Activated CD4-positive, alpha-beta memory T cell treated with anti-CD3 and anti-CD28 coated beads, Interleukin-2, amount 10 ng/mL, durations not matched to agents 7 days and 5 days (primary cell): ENCODE measurements at regions of chr20 and their contacts with region 1.

Region 1: GRCh38 chr20:17536944-17537444 is 5.8 kb upstream of the BFSP1 start:
- DNase-seq: peak; percentile 77
- H3K4me3 Mint-ChIP-seq: no peak overlapping the region
- H3K27ac Mint-ChIP-seq: no peak overlapping the region
- H3K4me1 Mint-ChIP-seq: peaks cover 45% of the 10 kb centered on the region
- H3K27me3 Mint-ChIP-seq: peaks cover 25% of the 10 kb centered on the region

Region 2: GRCh38 chr20:17617551-17618223 is 80.7 kb after region 1 on chr20:
- CTCF ChIA-PET with region 1: interaction called, 33 read pairs
- POLR2A ChIA-PET with region 1: no interaction called
- DNase-seq: peak; percentile 55
- H3K4me3 Mint-ChIP-seq: no peak overlapping the region
- H3K27ac Mint-ChIP-seq: no peak overlapping the region
- H3K4me1 Mint-ChIP-seq: peaks cover 14% of the 10 kb centered on the region
- H3K27me3 Mint-ChIP-seq: no peaks in the 10 kb centered on the region

Region 3: DNA sequence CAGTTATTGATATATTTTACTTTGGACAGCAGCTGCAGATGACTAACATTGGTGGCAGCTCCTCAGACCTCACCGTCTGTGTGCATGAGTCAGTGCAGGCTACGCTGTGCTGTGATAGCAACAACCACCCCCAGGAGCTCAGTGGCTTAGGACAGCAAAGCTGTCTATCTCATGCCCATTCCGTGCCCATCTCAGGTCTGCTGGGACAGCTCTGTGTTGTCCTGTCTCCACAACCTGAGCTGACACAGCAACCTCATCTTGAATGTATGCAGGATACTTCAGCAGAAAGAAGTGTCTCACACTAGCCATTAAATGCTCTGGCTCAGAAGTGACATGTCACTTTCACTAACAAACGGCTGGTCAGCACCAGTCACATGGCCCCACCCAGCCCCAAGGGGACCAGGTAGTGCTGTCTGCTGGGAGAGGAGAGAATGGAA is 210.5 kb after region 1 on chr20:
- CTCF ChIA-PET with region 1: no interaction called
- POLR2A ChIA-PET with region 1: no interaction called
- DNase-seq: no peak
- H3K4me3 Mint-ChIP-seq: no peak overlapping the region
- H3K27ac Mint-ChIP-seq: no peak overlapping the region
- H3K4me1 Mint-ChIP-seq: no peaks in the 10 kb centered on the region
- H3K27me3 Mint-ChIP-seq: peaks cover 5% of the 10 kb centered on the region